Posterior cingulate gyrus (tissue), 11 donors: ENCODE measurements at regions of chr10 and their contacts with region 1.

Region 1: DNA sequence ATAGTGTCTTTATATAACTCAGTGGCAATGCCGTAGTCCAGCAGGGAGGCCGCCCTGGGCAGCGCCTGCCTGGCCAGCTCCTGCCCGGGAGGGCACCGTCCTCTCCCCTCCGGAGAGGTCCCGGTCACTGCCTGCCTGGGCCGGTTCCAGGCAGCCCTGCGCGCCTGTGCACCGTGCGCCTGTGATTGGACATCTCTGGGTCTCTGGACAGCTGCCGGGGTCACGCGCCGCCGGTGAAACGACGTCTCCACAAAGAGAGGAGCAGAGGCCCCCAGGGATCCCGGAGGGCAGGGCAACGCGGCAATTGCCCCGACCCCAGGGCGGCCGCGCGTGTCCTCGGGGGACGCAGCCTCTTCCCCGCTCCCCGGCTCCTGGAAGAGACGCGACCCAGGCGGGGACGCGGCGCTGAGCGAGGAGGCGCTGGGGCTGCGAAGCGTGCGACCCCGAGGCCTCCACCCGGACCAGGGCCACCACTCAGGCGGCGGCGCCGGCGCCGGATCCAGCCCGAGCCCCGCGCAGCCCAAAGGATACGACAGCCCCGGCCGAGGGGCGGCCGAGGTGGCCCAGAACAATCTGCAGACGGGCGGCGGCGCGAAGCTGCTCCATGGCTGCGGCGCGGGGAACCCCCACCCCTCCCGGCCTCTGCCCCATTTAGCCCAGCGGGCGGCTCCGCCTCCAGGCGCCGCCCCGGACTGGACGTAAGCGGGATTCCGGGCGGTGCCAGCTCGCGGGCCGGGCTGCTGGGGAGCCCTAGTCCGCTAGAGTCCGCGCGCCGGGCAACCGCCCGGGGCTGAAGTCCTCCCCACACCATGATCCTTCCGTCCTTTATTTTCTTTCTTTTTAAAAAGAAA is at the start of gene PHYH:
- DNase-seq: peak; percentile 77 to 99 (median 91)

Region 2: GRCh38 chr10:13099666-13100348 is 199.9 kb before region 1 on chr10 and contains the start of gene OPTN:
- intact Hi-C with region 1: loop called (anchors 2 kb)
- DNase-seq: peak; percentile 66 to 97 (median 77)

Region 3: GRCh38 chr10:13160934-13161856 is 138.5 kb before region 1 on chr10 and contains the start of gene MCM10:
- intact Hi-C with region 1: loop called (anchors 1 kb)
- DNase-seq: peak; percentile 98 to 100 (median 99)

Region 4: DNA sequence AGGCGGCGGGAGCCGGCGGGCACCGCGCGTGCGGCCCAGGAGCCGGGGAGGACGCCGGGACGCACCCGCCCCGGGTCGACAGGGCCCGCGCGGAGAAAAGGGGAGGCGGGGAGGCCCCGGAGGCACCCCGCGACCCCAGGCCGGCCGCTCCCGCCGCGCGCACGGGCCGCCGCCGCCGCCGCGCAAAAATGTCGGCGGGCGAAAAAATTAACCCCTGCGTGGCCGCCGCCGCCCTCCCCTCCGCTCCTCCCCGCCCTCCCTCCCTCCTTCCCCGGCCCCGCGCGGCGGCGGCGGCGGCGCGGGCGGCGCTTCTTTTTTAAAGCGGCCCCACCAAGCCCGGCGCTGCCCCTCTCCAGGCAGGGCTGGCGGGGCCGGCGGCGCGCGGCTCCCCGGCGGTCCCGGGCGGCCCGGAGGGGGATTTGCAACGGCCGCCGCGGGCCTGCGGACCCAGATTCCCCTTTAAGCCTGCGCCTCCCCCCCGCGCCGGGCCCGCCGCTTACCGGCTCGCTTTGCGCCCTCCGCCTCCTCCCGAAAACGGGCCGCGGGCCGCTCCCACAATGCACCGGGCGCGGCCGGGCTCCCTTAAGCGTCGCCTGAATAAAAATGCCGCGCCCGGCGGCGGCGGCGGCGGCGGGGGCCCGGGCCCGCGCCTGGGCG is 48.0 kb after region 1 on chr10:
- intact Hi-C with region 1: loop called (anchors 2 kb)
- DNase-seq: peak; percentile 67 to 95 (median 74)

Region 5: GRCh38 chr10:13717931-13718772 is 418.5 kb after region 1 on chr10:
- intact Hi-C with region 1: no loop called
- DNase-seq: peak; percentile 24 to 93 (median 62)